ENCODE measurements at regions of chr1 and their contacts with region 1.

Region 1: DNA sequence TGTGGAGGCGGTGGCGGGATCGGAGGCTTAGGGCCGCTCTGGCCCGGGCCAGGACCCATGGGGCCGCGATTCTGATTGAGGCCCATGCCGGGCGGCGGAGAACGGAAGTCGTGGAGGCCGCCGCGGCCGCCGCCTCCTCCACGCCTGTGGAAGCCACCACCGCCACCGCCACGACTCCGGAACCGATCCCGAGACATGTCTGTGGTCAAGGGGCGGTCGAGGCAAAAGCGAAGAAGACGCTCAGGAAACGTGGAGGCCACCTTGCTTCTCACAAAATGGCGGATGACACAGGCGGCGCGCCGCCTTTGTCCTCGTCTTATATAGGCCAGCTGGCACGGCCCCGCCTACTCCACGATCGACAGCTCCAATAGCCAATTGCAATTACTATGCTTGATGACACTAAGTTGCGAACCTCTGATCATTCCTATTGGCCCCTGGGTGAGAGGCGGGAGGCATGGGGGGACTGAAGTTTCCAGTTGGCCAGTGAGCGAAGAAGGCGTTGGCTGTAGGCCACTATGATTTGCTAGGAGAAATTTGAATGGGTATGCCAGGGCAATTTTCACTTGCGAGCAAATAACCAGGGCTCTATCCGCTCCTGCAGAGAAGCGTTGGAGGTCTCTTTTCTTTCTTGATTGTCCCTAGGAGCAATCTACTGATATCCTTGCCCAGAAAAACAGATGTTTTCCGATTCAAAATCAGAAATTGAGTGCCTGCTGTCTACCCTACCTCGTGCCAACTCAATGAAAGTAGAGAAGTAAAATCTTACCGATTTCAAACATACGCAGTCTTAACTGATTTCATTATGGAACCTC is at the start of gene SFPQ:
- H3K4me3 Mint-ChIP-seq: peak within 1 kb of the TSS; percentile 93
- H3K27ac Mint-ChIP-seq: peak within 1 kb of the TSS; percentile 99
- H3K4me1 Mint-ChIP-seq: peaks cover 46% of the 10 kb centered on the region
- H3K27me3 Mint-ChIP-seq: no peaks in the 10 kb centered on the region

Region 2: GRCh38 chr1:35030756-35031446 is 162.2 kb before region 1 on chr1:
- intact Hi-C with region 1: loop called (anchors 2 kb)
- H3K4me3 Mint-ChIP-seq: peak overlapping the region; percentile 96
- H3K27ac Mint-ChIP-seq: peak overlapping the region; percentile 95
- H3K4me1 Mint-ChIP-seq: peaks cover 37% of the 10 kb centered on the region
- H3K27me3 Mint-ChIP-seq: peaks cover 1% of the 10 kb centered on the region

Region 3: GRCh38 chr1:35268282-35269200 is 75.5 kb after region 1 on chr1 and contains the start of gene ZMYM4:
- intact Hi-C with region 1: loop called (anchors 2 kb)
- H3K4me3 Mint-ChIP-seq: peak within 1 kb of the TSS; percentile 80
- H3K27ac Mint-ChIP-seq: peak within 1 kb of the TSS; percentile 65
- H3K4me1 Mint-ChIP-seq: peaks cover 37% of the 10 kb centered on the region
- H3K27me3 Mint-ChIP-seq: no peaks in the 10 kb centered on the region

Measured in dendritic cell treated with granulocyte-macrophage colony-stimulating factor and Interleukin-4, amounts not matched to agents 40 ng/mL and 50 ng/mL, for 4 days (primary cell).